Common myeloid progenitor, CD34-positive (primary cell): ENCODE measurements at regions of chr3 and their contacts with region 1.

Region 1: DNA sequence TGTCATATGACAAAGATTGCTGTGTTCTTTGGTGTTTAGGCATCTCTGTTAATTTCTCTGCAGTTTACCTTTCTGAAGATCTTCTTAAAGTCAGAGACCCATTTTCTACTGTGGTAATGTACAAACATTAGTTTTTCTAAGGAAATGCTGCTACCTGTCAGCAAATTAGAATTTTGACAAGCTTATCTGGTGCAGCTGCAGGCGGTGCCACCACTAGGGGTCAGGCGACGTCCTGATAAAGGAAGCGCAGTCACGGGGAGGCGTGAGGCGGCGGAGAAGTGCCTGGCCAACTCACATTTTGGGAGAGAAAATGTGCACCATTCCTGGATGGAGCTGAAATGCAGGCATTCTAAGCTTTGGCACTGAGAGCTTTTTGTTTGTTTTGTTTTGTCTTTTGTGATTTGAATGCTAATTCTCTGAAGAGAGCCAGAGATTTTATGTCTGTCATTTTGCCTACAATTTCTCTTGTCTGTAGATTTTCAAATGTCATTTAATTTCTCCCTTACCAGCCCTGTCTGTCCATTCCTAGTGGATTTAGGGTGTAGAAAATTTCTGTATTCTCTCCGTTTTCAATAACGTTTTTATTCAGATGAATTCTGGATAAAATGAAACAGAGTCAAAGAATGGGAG is 24.9 kb upstream of the SIAH2 start:
- DNase-seq: peak; percentile 79 to 87 (median 86)
- H3K4me3 ChIP-seq: no peak overlapping the region
- H3K27ac ChIP-seq: no peak overlapping the region
- H3K4me1 ChIP-seq: no peaks in the 10 kb centered on the region
- H3K27me3 ChIP-seq: peaks cover 0 to 2% (median 0%) of the 10 kb centered on the region in 5 experiments

Region 2: DNA sequence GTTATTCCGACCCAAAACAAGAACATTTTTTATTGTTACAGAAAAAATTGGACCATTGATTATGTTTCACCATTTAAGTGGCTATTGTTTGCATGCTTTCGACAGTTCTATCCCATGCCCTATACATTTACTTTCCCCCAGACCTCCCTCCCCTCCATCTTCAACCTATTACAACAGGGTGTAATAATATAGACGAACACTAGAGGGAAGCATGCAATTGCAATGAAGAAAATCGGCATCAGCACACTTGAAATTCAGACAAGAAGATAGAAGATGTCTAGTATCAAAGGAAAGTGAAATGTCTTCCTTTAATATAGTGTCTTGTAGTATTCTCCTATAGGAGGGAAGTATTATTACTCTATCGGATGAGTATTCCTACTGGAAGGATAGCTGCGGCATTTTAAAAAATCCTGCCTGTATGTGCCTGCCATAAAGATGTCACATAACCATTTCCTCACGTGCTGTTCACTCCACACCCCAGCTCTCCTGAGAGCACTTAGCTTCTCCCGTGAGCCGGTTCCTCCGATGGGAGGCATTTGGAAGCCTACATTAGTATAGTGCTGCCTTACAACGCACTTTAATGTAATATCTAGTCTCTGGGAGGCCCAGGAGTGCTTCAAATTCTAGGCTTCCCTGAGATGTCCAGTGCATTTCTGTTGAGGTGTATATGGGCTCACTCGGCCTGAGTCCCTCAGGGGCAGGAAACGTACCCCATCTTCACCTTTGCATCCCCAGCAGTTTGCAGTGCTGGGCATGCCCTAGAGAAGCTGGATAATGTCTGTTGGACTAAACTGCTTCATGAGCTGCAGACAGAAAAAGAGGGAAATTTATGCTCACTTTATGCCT is 66.3 kb before region 1 on chr3:
- CTCF ChIA-PET with region 1: interaction called, 11 read pairs
- POLR2A ChIA-PET with region 1: no interaction called
- DNase-seq: peak; percentile 69 to 81 (median 80)
- H3K4me3 ChIP-seq: peak overlapping the region in 1 of 7 experiments; percentile 34
- H3K27ac ChIP-seq: no peak overlapping the region
- H3K4me1 ChIP-seq: peaks cover 0 to 5% (median 2%) of the 10 kb centered on the region in 4 experiments
- H3K27me3 ChIP-seq: no peaks in the 10 kb centered on the region

Region 3: GRCh38 chr3:150775091-150775501 is 12.8 kb before region 1 on chr3:
- CTCF ChIA-PET with region 1: interaction called, 66 read pairs
- POLR2A ChIA-PET with region 1: no interaction called
- DNase-seq: no peak
- H3K4me3 ChIP-seq: no peak overlapping the region
- H3K27ac ChIP-seq: no peak overlapping the region
- H3K4me1 ChIP-seq: no peaks in the 10 kb centered on the region
- H3K27me3 ChIP-seq: no peaks in the 10 kb centered on the region

Region 4: DNA sequence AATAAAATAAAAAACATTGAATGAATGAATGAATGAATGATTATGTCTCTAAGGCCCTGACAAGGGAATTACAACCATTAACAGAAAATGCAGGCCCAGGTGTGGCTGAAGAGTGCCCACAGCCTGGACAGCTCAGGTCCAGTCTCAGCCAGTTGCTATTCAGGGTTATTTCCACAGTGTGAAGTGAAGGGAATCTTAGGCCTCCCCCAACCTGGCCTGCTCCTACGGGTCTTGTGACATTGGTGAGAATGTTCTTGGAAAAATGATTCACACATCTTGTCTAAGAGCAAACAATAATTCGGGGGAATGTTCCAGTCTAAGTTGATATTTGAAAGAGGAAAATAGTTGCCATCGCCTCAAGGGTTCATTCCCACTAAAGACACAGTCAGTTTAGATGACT is 80.4 kb after region 1 on chr3:
- CTCF ChIA-PET with region 1: interaction called, 12 read pairs
- POLR2A ChIA-PET with region 1: no interaction called
- DNase-seq: no peak
- H3K4me3 ChIP-seq: no peak overlapping the region
- H3K27ac ChIP-seq: no peak overlapping the region
- H3K4me1 ChIP-seq: peaks cover 0 to 9% (median 0%) of the 10 kb centered on the region in 4 experiments
- H3K27me3 ChIP-seq: no peaks in the 10 kb centered on the region